CD14-positive monocyte (primary cell): ENCODE measurements at regions of chr1 and their contacts with region 1.

Region 1: DNA sequence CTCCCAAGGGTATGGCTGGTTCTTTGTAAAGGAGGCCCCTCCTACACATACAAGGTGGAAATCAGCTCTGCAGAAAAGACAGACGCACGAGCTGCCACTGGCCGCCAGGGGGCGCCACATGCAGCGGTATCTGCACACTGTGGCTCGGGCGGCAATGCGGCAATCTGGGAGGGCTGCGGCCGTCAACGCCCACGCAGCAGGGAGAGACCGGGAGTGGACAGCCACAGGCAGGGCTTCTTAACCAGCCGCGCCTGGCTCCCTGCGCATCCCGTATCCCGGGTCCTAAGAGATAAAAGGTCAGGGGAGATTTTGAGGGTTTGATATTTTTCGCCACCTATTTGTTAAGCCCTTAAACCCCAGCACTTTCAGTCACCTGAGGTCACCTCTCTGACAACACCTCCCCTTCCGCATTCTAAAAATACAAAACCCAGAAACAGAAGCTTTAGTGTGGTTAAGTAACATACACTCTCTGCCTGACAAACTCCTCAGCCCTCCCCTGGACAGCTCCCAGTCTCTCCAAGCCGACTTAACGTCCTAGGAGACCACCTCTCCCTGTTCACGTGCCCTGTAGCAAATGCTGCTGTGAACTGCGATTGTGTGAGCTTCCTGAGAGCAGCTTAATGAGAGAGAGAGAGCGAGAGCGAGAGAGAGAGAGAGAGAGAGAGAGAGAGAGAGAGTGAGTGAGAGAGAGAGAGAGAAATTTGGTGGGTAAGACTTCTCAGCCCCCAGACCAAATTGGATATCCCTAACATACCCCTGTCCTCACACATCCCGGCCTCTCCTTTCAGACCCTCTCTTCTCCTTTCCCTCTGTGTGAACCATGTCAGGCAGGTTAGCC is 13.5 kb upstream of the KCNA2 start:
- DNase-seq: peak; percentile 85 to 90 (median 89)
- H3K4me3 ChIP-seq: peak overlapping the region; percentile 46 to 75 (median 63)
- H3K4me3 Mint-ChIP-seq: peak overlapping the region; percentile 86 to 92
- H3K27ac ChIP-seq: peak overlapping the region; percentile 76 to 80
- H3K27ac Mint-ChIP-seq: peak overlapping the region; percentile 88 to 99 (median 94)
- H3K4me1 ChIP-seq: peaks cover 34 to 40% of the 10 kb centered on the region in 2 donors
- H3K4me1 Mint-ChIP-seq: peaks cover 43% of the 10 kb centered on the region
- H3K27me3 ChIP-seq: no peaks in the 10 kb centered on the region
- H3K27me3 Mint-ChIP-seq: peaks cover 0 to 4% (median 4%) of the 10 kb centered on the region in 3 donors
- CTCF ChIP-seq: peak; percentile 98

Region 2: GRCh38 chr1:110524311-110525251 is 95.0 kb before region 1 on chr1:
- intact Hi-C with region 1: loop called in 1 of 2 experiments (anchors 5 kb)
- DNase-seq: peak; percentile 25 to 46 (median 29)
- H3K4me3 ChIP-seq: no peak overlapping the region
- H3K4me3 Mint-ChIP-seq: peak overlapping the region in 1 of 2 donors; percentile 5
- H3K27ac ChIP-seq: no peak overlapping the region
- H3K27ac Mint-ChIP-seq: no peak overlapping the region
- H3K4me1 ChIP-seq: peaks cover 0 to 3% of the 10 kb centered on the region in 2 donors
- H3K4me1 Mint-ChIP-seq: peaks cover 7% of the 10 kb centered on the region
- H3K27me3 ChIP-seq: no peaks in the 10 kb centered on the region
- H3K27me3 Mint-ChIP-seq: peaks cover 15 to 29% (median 28%) of the 10 kb centered on the region in 3 donors
- CTCF ChIP-seq: peak; percentile 73

Region 3: DNA sequence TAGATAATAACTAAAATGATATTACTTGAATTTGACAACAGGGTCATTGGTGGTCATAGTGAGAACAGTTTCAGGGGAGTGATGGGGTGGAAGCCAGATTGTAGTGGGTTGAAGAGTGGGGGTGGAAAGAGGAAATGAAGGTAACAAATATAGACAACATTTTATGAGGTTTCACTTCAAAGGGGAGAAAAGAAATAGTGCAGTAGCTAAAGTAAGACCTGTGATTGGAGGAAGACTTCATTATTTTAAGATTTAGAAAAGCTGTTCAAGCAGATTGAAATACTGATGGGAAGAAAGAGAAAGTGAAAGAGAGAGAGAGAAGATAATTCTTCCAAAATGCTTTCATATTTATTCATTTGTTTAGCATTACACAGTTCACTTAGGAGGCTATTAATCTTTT is 107.1 kb after region 1 on chr1:
- intact Hi-C with region 1: no loop called
- DNase-seq: no peak
- H3K4me3 ChIP-seq: no peak overlapping the region
- H3K4me3 Mint-ChIP-seq: no peak overlapping the region
- H3K27ac ChIP-seq: no peak overlapping the region
- H3K27ac Mint-ChIP-seq: no peak overlapping the region
- H3K4me1 ChIP-seq: peaks cover 0 to 4% of the 10 kb centered on the region in 2 donors
- H3K4me1 Mint-ChIP-seq: peaks cover 7% of the 10 kb centered on the region
- H3K27me3 ChIP-seq: peaks cover 0 to 5% of the 10 kb centered on the region in 2 donors
- H3K27me3 Mint-ChIP-seq: peaks cover 13 to 19% (median 19%) of the 10 kb centered on the region in 3 donors
- CTCF ChIP-seq: no peak

Region 4: DNA sequence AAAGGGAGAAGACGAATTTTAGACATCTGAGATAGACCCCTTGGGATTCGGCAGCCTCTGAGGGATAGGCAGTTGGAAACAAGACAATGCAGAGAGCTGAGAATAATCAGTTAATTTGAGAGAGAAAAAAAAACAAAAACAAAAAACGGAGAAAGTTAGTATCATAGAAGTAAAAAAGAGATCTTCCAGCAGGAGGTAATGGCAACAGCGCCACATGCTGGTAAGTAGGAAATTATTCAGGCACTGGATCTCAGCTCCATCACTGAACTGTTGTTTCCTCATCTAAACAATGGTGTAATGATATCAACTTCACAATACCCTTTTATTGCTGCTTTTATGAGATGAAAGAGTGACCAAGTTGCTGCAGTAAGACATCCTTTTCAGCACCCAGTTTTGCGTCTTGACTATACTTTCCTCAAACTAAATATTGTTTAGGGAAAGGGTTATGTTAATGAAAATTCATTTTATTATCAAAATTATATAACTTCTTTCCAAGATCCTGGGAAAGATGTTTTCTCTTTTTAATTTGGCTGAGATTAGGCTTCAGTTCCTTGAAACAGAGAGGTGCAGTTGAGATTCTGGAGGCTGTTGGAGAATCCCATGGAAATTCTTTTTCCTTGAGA is 146.5 kb after region 1 on chr1:
- intact Hi-C with region 1: loop called (anchors 5 kb)
- DNase-seq: peak; percentile 57 to 73 (median 70)
- H3K4me3 ChIP-seq: no peak overlapping the region
- H3K4me3 Mint-ChIP-seq: peak overlapping the region in 1 of 2 donors; percentile 51
- H3K27ac ChIP-seq: no peak overlapping the region
- H3K27ac Mint-ChIP-seq: peak overlapping the region in 3 of 7 donors; percentile 59 to 69 (median 65)
- H3K4me1 ChIP-seq: peaks cover 6 to 10% of the 10 kb centered on the region in 2 donors
- H3K4me1 Mint-ChIP-seq: peaks cover 14% of the 10 kb centered on the region
- H3K27me3 ChIP-seq: peaks cover 0 to 2% of the 10 kb centered on the region in 2 donors
- H3K27me3 Mint-ChIP-seq: peaks cover 6 to 7% (median 7%) of the 10 kb centered on the region in 3 donors
- CTCF ChIP-seq: peak; percentile 85

Region 5: DNA sequence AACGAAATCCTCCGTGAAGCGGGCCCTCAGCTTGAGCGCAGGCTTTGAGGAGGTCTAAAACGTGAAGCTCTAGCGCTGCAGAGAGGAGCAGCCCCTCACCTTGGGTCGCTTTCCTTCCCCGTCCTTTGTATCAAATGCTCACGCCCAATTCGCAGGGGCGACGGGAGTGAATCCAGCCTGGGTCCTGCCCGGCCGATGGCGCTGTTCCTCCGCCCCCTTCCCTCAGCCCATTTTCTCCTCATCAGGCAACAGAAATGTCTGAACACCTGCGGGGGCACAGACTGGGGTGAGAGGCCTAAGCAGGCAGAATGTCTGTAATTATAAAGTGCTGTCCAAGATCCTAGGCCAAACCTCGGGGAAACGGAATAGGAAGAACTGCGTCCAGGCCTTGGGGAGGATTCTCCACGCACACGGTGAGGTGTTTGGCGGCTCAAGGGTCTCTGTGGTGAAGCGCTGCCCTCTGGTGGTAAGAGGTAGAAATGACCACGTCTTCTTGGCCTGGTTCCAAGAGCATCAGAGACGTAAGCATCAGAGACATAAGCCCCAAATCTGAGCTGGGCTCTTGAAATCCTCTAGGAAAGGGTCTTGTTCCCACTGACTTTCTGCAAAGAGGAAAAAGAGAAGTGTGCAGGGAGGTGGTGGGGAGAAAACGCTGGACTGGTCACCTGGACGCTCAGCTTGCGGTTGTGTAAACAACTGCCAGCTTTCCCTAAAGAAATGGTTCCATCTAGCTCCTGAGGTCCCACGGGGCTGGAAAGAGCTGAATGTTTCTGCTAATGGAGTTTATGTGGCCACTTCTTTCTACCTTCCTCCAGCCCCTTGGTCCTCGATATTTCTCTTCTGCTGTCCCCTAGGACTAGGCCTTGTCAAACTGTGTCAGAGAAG is 161.2 kb after region 1 on chr1:
- intact Hi-C with region 1: loop called (anchors 2 to 5 kb)
- DNase-seq: peak; percentile 74 to 81 (median 81)
- H3K4me3 ChIP-seq: no peak overlapping the region
- H3K4me3 Mint-ChIP-seq: peak overlapping the region in 1 of 2 donors; percentile 43
- H3K27ac ChIP-seq: no peak overlapping the region
- H3K27ac Mint-ChIP-seq: peak overlapping the region in 1 of 7 donors; percentile 48
- H3K4me1 ChIP-seq: peaks cover 4% of the 10 kb centered on the region in 2 donors
- H3K4me1 Mint-ChIP-seq: peaks cover 10% of the 10 kb centered on the region
- H3K27me3 ChIP-seq: no peaks in the 10 kb centered on the region
- H3K27me3 Mint-ChIP-seq: peaks cover 0 to 7% (median 5%) of the 10 kb centered on the region in 3 donors
- CTCF ChIP-seq: peak; percentile 84